ENCODE measurements at regions of chr17 and their contacts with region 1.

Region 1: GRCh38 chr17:74972107-74972972 is at the start of gene HID1:
- DNase-seq: no peak
- ATAC-seq: peak; percentile 89
- H3K4me3 ChIP-seq: peak within 1 kb of the TSS; percentile 80 to 84
- H3K27ac ChIP-seq: peak within 1 kb of the TSS; percentile 48; the same call in 1 of the 2 replicates
- H3K4me1 ChIP-seq: peaks cover 36 to 39% of the 10 kb centered on the region in 2 experiments
- H3K27me3 ChIP-seq: no peaks in the 10 kb centered on the region
- CTCF ChIP-seq: no peak
- POLR2A ChIP-seq: no peak
- RAD21 ChIP-seq: no peak
- total RNA-seq, gene HID1: 43.8 TPM

Region 2: DNA sequence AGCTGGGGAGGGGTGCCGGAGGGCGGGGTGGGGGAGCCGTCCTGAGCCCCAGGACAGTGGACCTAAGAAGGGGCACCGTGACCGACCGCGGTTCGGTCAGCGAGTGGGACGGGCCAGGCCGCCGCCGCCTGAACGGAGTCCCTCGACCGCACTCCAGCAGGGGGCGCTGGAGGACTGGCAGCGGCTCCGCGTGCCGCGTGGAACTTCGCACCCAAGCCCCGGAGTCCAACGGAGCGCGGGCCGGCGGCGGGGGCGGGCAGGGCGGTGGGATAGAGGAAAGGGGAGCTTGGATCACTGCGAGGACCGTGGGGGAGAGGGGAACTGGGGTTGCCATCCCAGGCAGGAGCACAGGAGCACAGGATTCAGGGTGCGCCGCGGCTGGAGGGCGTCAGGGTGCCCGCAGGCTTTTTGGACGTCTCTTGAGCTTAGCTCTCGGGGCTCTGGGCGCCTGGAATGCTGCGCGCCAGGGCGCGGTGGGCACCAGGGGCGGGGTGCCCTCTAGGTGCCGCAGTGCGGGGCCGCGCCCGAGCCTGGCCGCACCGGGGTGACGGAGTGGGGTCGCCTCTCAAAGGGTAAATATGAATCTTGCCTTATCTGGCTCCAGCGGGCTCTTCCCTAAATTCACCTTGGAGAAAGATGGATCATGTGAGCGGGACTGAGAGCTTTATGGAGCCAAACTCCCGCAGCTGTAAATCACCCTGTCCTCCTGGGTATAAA is 48.6 kb before region 1 on chr17:
- CTCF ChIA-PET with region 1: no interaction called
- POLR2A ChIA-PET with region 1: no interaction called
- RAD21 ChIA-PET with region 1: interaction called in 1 of 2 experiments, 10 read pairs
- intact Hi-C with region 1: no loop called
- DNase-seq: no peak
- ATAC-seq: peak; percentile 84
- H3K4me3 ChIP-seq: peak overlapping the region; percentile 58 to 65
- H3K27ac ChIP-seq: no peak overlapping the region
- H3K4me1 ChIP-seq: peaks cover 16 to 34% of the 10 kb centered on the region in 2 experiments
- H3K27me3 ChIP-seq: peaks cover 4% of the 10 kb centered on the region; the same call in 1 of the 2 replicates
- CTCF ChIP-seq: peak; percentile 84 to 93 (median 90)
- POLR2A ChIP-seq: no peak
- RAD21 ChIP-seq: no peak; the same call in none of the 2 replicates